ENCODE measurements at regions of chr14 and their contacts with region 1.

Region 1: DNA sequence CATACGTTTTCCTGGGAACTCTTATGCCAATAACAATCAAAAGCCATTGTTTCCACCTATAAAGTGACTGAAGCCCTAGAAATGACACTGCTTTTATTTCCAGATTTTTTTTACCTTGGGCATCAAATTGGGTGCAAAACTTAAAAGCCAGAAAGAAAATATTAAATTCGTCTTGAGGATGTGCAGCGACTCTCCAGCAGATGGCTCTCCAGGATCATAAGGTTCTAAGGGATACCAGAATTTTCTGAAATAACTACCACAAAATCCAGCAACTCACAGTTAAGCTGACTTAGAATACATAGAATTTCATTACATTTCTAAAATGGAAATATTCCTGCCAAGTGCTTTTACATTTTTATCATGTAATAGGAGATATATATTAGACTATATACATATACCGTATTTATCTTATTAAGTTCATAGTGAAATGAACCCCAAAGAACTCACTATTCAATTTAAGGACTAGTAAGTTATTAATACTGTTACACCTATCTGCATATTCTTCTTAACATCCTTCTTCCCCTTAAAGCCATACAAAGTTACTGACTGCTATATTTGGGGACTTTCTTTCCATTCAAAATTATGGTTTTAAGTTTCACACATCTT is 44.0 kb downstream of the ARMH4 start:
- DNase-seq: peak in 6 of 9 experiments; percentile 6 to 67 (median 27)
- ATAC-seq: peak; percentile 51
- H3K4me3 ChIP-seq: no peak overlapping the region
- H3K4me3 Mint-ChIP-seq: no peak overlapping the region
- H3K27ac ChIP-seq: no peak overlapping the region
- H3K27ac Mint-ChIP-seq: no peak overlapping the region
- H3K4me1 ChIP-seq: no peaks in the 10 kb centered on the region
- H3K4me1 Mint-ChIP-seq: no peaks in the 10 kb centered on the region
- H3K27me3 ChIP-seq: no peaks in the 10 kb centered on the region
- H3K27me3 Mint-ChIP-seq: peaks cover 16% of the 10 kb centered on the region
- CTCF ChIP-seq: peak; percentile 77

Region 2: GRCh38 chr14:58027909-58028308 is 80.1 kb before region 1 on chr14:
- CTCF ChIA-PET with region 1: no interaction called
- POLR2A ChIA-PET with region 1: no interaction called
- intact Hi-C with region 1: no loop called
- DNase-seq: no peak
- ATAC-seq: no peak
- H3K4me3 ChIP-seq: no peak overlapping the region
- H3K4me3 Mint-ChIP-seq: no peak overlapping the region
- H3K27ac ChIP-seq: no peak overlapping the region
- H3K27ac Mint-ChIP-seq: no peak overlapping the region
- H3K4me1 ChIP-seq: no peaks in the 10 kb centered on the region
- H3K4me1 Mint-ChIP-seq: no peaks in the 10 kb centered on the region
- H3K27me3 ChIP-seq: no peaks in the 10 kb centered on the region
- H3K27me3 Mint-ChIP-seq: peaks cover 7% of the 10 kb centered on the region
- CTCF ChIP-seq: no peak

Region 3: DNA sequence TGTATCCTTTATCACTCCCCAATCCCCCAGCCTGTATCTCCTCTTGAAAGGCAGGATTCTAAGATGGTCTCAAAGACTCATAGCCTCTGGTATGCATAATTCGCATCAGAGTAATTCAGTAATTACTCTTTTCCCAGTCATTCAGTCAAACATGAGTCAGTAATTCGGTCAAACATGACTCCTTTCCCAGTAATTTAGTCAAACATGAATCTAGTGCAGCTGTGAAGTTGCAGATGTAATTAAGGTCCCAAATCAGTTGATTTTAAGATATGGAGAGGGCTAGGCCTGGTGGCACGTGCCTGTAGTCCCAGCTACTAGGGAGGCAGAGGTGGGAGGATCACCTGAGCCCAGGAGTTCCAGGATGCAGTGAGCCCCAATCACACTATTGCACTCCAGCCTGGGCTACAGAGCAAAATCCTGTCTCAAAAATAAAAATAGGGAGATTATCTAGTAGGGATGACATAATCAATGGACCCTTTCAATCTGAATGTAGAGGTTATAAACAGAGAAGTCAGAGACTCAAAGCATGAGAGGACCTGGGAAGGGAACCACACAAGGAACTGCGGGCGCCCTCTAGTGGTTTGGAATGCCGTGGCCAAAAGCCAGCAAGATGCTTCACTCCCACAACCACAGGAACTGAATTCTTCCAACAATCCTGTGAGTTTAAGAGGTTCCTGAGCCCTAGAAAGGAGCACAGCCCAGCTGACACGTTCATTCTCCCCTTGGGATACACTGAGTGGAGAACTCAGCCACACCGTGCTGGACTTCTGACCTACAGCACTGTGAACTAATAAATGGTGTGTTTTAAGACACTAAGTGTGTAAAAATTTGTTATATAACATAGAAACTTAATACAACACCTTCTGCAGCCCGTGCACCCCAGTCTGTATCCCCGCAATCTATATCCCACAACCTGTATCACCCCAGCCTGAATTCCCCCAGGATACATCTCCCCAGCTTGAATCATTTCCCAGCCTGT is 58.2 kb after region 1 on chr14:
- CTCF ChIA-PET with region 1: interaction called, 8 read pairs
- POLR2A ChIA-PET with region 1: no interaction called
- intact Hi-C with region 1: loop called (anchors 1 kb)
- DNase-seq: peak; percentile 44 to 82 (median 72)
- ATAC-seq: peak; percentile 48
- H3K4me3 ChIP-seq: no peak overlapping the region
- H3K4me3 Mint-ChIP-seq: no peak overlapping the region
- H3K27ac ChIP-seq: no peak overlapping the region
- H3K27ac Mint-ChIP-seq: no peak overlapping the region
- H3K4me1 ChIP-seq: no peaks in the 10 kb centered on the region
- H3K4me1 Mint-ChIP-seq: no peaks in the 10 kb centered on the region
- H3K27me3 ChIP-seq: no peaks in the 10 kb centered on the region
- H3K27me3 Mint-ChIP-seq: peaks cover 13% of the 10 kb centered on the region
- CTCF ChIP-seq: peak; percentile 85

Region 4: DNA sequence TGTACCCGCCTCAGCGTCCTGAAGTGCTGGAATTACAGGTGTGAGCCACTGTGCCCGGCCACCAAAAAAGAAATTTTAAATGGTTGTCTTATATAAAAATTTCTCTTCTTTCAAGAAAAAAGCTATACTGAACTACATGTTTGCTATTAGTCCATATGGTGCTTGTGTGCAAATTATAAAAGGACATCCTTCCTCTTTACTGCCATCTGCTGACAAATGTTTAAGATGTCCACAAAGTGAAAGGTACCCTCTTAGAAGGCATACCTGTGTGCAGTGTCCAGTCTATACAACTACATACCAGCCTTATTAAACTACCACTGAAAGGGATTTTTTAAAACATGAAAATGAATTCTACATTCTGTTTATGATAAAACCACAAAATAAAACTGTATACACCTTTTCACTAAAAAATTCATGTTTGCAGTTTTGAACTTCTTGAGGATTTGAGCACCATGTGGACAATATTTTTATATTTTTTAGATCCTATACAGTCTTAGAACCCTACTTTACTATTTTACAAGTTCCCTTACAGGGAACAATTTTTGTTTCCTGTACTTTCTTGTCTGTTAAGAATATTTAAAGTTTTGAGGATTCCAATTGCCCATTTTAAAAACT is 254.9 kb after region 1 on chr14:
- CTCF ChIA-PET with region 1: interaction called, 11 read pairs
- POLR2A ChIA-PET with region 1: no interaction called
- intact Hi-C with region 1: loop called (anchors 1 to 2 kb)
- DNase-seq: peak in 2 of 9 experiments; percentile 43 to 58
- ATAC-seq: peak; percentile 62
- H3K4me3 ChIP-seq: no peak overlapping the region
- H3K4me3 Mint-ChIP-seq: no peak overlapping the region
- H3K27ac ChIP-seq: no peak overlapping the region
- H3K27ac Mint-ChIP-seq: no peak overlapping the region
- H3K4me1 ChIP-seq: no peaks in the 10 kb centered on the region
- H3K4me1 Mint-ChIP-seq: no peaks in the 10 kb centered on the region
- H3K27me3 ChIP-seq: no peaks in the 10 kb centered on the region
- H3K27me3 Mint-ChIP-seq: no peaks in the 10 kb centered on the region
- CTCF ChIP-seq: no peak

Region 5: GRCh38 chr14:58401585-58401984 is 293.5 kb after region 1 on chr14:
- CTCF ChIA-PET with region 1: interaction called, 3 read pairs
- POLR2A ChIA-PET with region 1: no interaction called
- intact Hi-C with region 1: loop called (anchors 1 to 2 kb)
- DNase-seq: peak in 2 of 9 experiments; percentile 16 to 26
- ATAC-seq: no peak
- H3K4me3 ChIP-seq: no peak overlapping the region
- H3K4me3 Mint-ChIP-seq: no peak overlapping the region
- H3K27ac ChIP-seq: no peak overlapping the region
- H3K27ac Mint-ChIP-seq: peak overlapping the region; percentile 24
- H3K4me1 ChIP-seq: no peaks in the 10 kb centered on the region
- H3K4me1 Mint-ChIP-seq: peaks cover 4% of the 10 kb centered on the region
- H3K27me3 ChIP-seq: no peaks in the 10 kb centered on the region
- H3K27me3 Mint-ChIP-seq: no peaks in the 10 kb centered on the region
- CTCF ChIP-seq: no peak

Region 6: DNA sequence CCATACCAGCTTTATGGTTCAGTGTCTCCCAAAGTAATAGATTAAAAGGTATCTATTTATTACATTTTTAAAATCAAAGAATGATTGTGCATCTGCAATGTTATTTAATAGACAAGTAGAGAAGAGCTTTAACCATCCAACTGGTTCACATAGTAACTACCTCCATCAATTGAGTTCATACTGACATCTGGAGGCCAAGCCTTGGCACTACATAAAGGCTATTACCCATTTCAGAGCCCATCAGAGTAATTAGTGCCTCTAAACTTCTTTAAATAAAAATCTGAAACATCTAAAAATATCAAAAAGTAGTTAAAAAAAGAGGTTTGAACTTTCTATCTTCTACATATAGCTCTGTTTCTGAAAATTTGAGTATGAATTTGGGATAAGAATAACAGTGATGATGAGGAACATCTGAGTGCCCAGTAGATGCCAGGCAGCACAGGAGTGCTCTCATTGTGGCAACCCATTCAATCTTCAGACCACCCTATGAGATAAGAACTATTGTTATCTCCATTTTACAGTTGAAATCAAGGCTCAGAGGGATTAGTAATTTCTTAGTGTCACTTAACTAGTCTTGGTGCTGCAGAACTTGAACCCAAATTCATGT is 947.5 kb after region 1 on chr14:
- CTCF ChIA-PET with region 1: no interaction called
- POLR2A ChIA-PET with region 1: no interaction called
- intact Hi-C with region 1: loop called (anchors 5 kb)
- DNase-seq: peak in 3 of 9 experiments; percentile 14 to 41 (median 14)
- ATAC-seq: no peak
- H3K4me3 ChIP-seq: no peak overlapping the region
- H3K4me3 Mint-ChIP-seq: no peak overlapping the region
- H3K27ac ChIP-seq: no peak overlapping the region
- H3K27ac Mint-ChIP-seq: no peak overlapping the region
- H3K4me1 ChIP-seq: no peaks in the 10 kb centered on the region
- H3K4me1 Mint-ChIP-seq: no peaks in the 10 kb centered on the region
- H3K27me3 ChIP-seq: no peaks in the 10 kb centered on the region
- H3K27me3 Mint-ChIP-seq: peaks cover 7% of the 10 kb centered on the region
- CTCF ChIP-seq: peak; percentile 70

Region 7: GRCh38 chr14:59564366-59564765 is 1456.3 kb after region 1 on chr14:
- CTCF ChIA-PET with region 1: no interaction called
- POLR2A ChIA-PET with region 1: no interaction called
- intact Hi-C with region 1: no loop called
- DNase-seq: no peak
- ATAC-seq: no peak
- H3K4me3 ChIP-seq: no peak overlapping the region
- H3K4me3 Mint-ChIP-seq: no peak overlapping the region
- H3K27ac ChIP-seq: no peak overlapping the region
- H3K27ac Mint-ChIP-seq: no peak overlapping the region
- H3K4me1 ChIP-seq: no peaks in the 10 kb centered on the region
- H3K4me1 Mint-ChIP-seq: no peaks in the 10 kb centered on the region
- H3K27me3 ChIP-seq: peaks cover 0 to 3% of the 10 kb centered on the region in 2 experiments
- H3K27me3 Mint-ChIP-seq: peaks cover 10% of the 10 kb centered on the region
- CTCF ChIP-seq: no peak